Upper lobe of right lung (tissue), 1 donor: ENCODE measurements at regions of chr1 and their contacts with region 1.

Region 1: GRCh38 chr1:27102707-27103491 is 52.0 kb downstream of the SLC9A1 start:
- DNase-seq: peak; percentile 89
- ATAC-seq: peak; percentile 72
- H3K4me3 ChIP-seq: no peak overlapping the region
- H3K27ac ChIP-seq: no peak overlapping the region
- H3K4me1 ChIP-seq: peaks cover 23% of the 10 kb centered on the region
- H3K27me3 ChIP-seq: no peaks in the 10 kb centered on the region
- CTCF ChIP-seq: peak; percentile 98

Region 2: DNA sequence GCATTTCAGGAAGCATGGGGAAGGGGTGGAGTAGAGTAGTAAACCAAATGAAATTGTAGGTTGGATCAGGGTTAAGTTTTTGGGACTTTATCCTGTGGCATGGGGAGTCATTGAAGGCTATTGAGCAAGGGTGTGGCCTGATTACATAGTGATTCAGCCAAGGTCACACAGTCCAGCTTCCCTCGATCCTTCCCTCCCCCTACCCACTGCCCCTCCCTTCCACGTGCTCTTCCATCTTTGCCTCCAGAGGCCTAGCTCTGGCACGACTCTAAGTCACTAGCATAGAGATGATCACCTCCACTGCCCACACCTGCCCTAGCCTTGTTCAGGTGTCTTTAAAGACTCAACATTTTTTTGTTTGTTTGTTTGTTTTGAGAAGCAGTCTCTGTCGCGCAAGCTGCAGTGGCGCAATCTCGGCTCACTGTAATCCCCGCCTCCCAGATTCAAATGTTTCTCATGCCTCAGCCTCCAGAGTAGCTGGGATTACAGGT is 89.2 kb after region 1 on chr1:
- intact Hi-C with region 1: loop called (anchors 5 kb)
- DNase-seq: no peak
- ATAC-seq: peak; percentile 80
- H3K4me3 ChIP-seq: no peak overlapping the region
- H3K27ac ChIP-seq: no peak overlapping the region
- H3K4me1 ChIP-seq: peaks cover 7% of the 10 kb centered on the region
- H3K27me3 ChIP-seq: no peaks in the 10 kb centered on the region
- CTCF ChIP-seq: no peak